Mammary epithelial cell (primary cell): ENCODE measurements at regions of chr2 and their contacts with region 1.

Region 1: GRCh38 chr2:64144057-64145013 is at the start of gene PELI1:
- DNase-seq: peak; percentile 99
- H3K4me3 ChIP-seq: peak within 1 kb of the TSS; percentile 92 to 96 (median 94)
- H3K27ac ChIP-seq: peak within 1 kb of the TSS; percentile 94
- H3K4me1 ChIP-seq: peaks cover 12% of the 10 kb centered on the region
- H3K27me3 ChIP-seq: no peaks in the 10 kb centered on the region
- CTCF ChIP-seq: peak in 1 of 2 donors; percentile 41
- total RNA-seq, gene PELI1: 18.9 to 26.7 TPM

Region 2: GRCh38 chr2:64157792-64158191 is 13.5 kb after region 1 on chr2:
- CTCF ChIA-PET with region 1: no interaction called
- dilution Hi-C with region 1: no loop called
- in situ Hi-C with region 1: no loop called
- intact Hi-C with region 1: no loop called
- DNase-seq: no peak
- H3K4me3 ChIP-seq: no peak overlapping the region
- H3K27ac ChIP-seq: no peak overlapping the region
- H3K4me1 ChIP-seq: no peaks in the 10 kb centered on the region
- H3K27me3 ChIP-seq: no peaks in the 10 kb centered on the region
- CTCF ChIP-seq: no peak

Region 3: GRCh38 chr2:64186699-64187605 is 42.6 kb after region 1 on chr2:
- CTCF ChIA-PET with region 1: no interaction called
- dilution Hi-C with region 1: no loop called
- in situ Hi-C with region 1: no loop called
- intact Hi-C with region 1: no loop called
- DNase-seq: no peak
- H3K4me3 ChIP-seq: no peak overlapping the region
- H3K27ac ChIP-seq: no peak overlapping the region
- H3K4me1 ChIP-seq: no peaks in the 10 kb centered on the region
- H3K27me3 ChIP-seq: no peaks in the 10 kb centered on the region
- CTCF ChIP-seq: no peak

Region 4: GRCh38 chr2:64228126-64228678 is 83.9 kb after region 1 on chr2:
- CTCF ChIA-PET with region 1: no interaction called
- dilution Hi-C with region 1: no loop called
- in situ Hi-C with region 1: no loop called
- intact Hi-C with region 1: loop called (anchors 5 kb)
- DNase-seq: peak; percentile 59
- H3K4me3 ChIP-seq: peak overlapping the region; percentile 1 to 33 (median 32)
- H3K27ac ChIP-seq: no peak overlapping the region
- H3K4me1 ChIP-seq: peaks cover 10% of the 10 kb centered on the region
- H3K27me3 ChIP-seq: no peaks in the 10 kb centered on the region
- CTCF ChIP-seq: no peak

Region 5: DNA sequence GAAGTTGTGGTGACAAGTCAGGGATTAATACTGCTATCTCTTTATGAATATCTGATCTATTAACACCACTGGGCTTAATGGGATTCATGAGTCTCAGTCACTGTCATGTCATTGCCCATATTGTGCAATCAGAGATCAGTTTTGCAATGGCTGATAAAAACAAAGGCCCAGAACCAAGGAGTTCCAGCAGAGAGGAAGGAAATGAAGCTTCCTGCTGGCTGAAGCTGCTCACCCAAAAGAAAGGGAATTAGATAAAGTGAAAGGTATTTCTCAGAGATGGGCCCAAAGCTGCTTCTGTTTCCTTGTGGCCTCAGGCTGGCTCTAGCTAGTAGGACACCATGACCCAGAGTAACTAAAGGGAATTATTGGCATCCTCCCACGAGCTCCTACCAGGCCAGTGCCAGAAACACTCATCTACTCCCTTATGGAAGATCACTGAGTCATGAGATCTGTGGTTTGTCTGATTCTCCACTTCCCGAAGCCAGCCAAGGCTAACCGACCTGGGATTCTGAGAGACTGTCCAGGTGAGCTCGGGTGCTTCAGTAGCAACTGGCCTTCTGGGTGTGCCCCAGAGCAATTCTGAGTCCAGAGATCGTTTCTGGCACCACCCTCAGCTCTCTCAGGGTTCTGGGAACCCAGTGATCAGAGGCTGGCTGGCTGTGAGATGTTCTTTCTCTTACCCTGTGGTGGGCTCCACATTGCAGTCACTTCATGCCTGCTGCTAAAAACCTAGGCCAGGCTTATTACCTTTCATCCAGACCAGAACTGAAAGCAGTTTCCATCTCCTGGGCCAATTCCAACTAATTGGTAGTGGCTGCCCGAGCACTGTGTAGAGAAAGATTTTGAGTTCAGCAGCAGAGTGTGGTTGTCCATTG is 129.4 kb after region 1 on chr2:
- CTCF ChIA-PET with region 1: no interaction called
- dilution Hi-C with region 1: no loop called
- in situ Hi-C with region 1: no loop called
- intact Hi-C with region 1: loop called (anchors 5 kb)
- DNase-seq: peak; percentile 96
- H3K4me3 ChIP-seq: no peak overlapping the region
- H3K27ac ChIP-seq: peak overlapping the region; percentile 85
- H3K4me1 ChIP-seq: peaks cover 53% of the 10 kb centered on the region
- H3K27me3 ChIP-seq: no peaks in the 10 kb centered on the region
- CTCF ChIP-seq: no peak

Region 6: DNA sequence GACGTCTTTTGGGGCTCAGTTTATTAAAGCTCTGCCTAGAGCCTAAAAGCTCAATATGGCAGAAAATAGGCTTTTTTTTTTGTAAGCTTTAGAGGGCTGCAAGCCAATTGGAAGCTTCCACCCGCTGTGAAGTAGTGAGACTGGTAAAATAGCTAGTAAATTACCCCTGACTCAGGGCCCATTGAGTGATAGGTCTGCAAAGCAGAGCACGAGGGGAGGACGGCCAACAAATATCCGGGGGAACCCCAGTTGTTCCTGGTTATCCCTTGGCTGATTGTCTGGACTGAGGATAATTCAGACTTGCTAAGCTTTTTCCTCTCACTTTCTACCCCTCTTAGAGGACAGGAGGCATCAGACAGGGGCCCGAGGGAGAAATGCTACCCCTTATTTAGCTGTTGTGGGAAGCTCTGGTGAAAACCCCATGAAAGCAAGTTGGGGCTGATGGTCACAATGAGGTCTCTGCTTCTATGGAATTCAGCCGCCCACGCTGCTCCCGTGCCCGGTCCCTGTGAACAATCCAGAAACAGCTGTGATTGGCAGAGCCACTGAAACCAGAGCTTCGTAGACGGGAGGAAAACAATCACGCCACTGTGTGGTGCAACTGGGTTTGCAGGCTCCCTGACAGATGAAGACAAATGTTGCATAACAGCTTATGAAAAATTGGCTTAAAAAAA is 167.8 kb after region 1 on chr2:
- CTCF ChIA-PET with region 1: interaction called, 3 read pairs
- dilution Hi-C with region 1: no loop called
- in situ Hi-C with region 1: no loop called
- intact Hi-C with region 1: loop called (anchors 1 kb)
- DNase-seq: peak; percentile 98
- H3K4me3 ChIP-seq: no peak overlapping the region
- H3K27ac ChIP-seq: peak overlapping the region; percentile 99
- H3K4me1 ChIP-seq: peaks cover 26% of the 10 kb centered on the region
- H3K27me3 ChIP-seq: no peaks in the 10 kb centered on the region
- CTCF ChIP-seq: peak; percentile 48 to 76